ENCODE measurements at regions of chr11 and their contacts with region 1.

Region 1: GRCh38 chr11:125141686-125142535 is 22.6 kb upstream of the PKNOX2 start:
- DNase-seq: peak; percentile 80
- CTCF ChIP-seq: peak; percentile 90

Region 2: GRCh38 chr11:124953753-124954589 is 187.9 kb before region 1 on chr11 and contains the start of gene CCDC15:
- CTCF ChIA-PET with region 1: interaction called, 26 read pairs
- POLR2A ChIA-PET with region 1: no interaction called
- DNase-seq: peak; percentile 93
- CTCF ChIP-seq: no peak

Region 3: DNA sequence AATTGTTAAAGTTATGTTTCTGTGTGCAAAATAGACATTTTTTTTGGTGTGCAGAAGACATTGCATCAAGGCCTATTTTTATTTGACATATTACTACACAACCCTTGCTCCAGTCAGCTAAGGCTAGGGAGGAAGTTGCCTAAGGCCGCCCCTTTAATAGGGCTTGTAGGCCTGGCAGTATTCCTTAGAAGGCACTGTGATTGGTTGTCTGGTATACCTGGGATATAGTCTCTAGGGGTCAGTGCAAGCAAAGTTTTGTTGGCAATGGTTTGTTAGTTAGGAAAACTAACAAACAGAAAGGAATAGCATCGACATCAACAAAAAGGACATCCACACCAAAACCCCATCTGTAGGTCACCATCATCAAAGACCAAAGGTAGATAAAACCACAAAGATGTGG is 171.0 kb before region 1 on chr11:
- CTCF ChIA-PET with region 1: interaction called, 20 read pairs
- POLR2A ChIA-PET with region 1: no interaction called
- DNase-seq: no peak
- CTCF ChIP-seq: no peak

Region 4: DNA sequence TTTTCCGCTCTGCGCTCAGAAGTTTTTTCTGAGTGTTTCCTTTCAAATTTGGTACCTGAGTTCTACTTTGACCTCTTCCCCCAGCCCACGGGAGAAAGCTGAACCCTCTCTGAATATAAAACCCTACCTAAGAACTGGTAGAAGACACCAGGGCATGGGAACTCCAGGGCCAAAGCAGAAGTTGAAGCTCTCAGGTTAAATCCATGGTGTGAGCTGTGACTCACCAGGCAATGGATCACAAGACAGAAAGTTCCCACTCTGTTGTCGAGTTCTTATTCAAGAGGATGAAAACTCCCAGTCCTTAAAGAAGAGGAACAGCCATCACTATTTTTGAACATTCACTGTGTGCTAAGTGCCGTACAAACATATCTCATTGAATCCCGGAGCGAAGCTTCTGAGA is 39.4 kb before region 1 on chr11:
- CTCF ChIA-PET with region 1: interaction called, 18 read pairs
- POLR2A ChIA-PET with region 1: no interaction called
- DNase-seq: peak; percentile 20
- CTCF ChIP-seq: no peak

Region 5: GRCh38 chr11:125117429-125117828 is 24.5 kb before region 1 on chr11:
- CTCF ChIA-PET with region 1: interaction called, 57 read pairs
- POLR2A ChIA-PET with region 1: no interaction called
- DNase-seq: no peak
- CTCF ChIP-seq: no peak

Region 6: GRCh38 chr11:125154378-125155099 is 12.6 kb after region 1 on chr11:
- CTCF ChIA-PET with region 1: interaction called, 28 read pairs
- POLR2A ChIA-PET with region 1: no interaction called
- DNase-seq: no peak
- CTCF ChIP-seq: no peak

Measured in GM10248 (cell line).